HCT116 (cell line): ENCODE measurements at regions of chr22 and their contacts with region 1.

Region 1: GRCh38 chr22:35761037-35761436 is 43.4 kb downstream of the APOL5 start:
- DNase-seq: peak; percentile 8
- ATAC-seq: peak; percentile 58; the same call in 1 of the 2 replicates
- H3K4me3 ChIP-seq: no peak overlapping the region
- H3K27ac ChIP-seq: no peak overlapping the region
- H3K4me1 ChIP-seq: no peaks in the 10 kb centered on the region
- H3K27me3 ChIP-seq: no peaks in the 10 kb centered on the region
- CTCF ChIP-seq: peak in 2 of 3 experiments; percentile 19 to 35; a peak in 2 of 6 replicates
- POLR2A ChIP-seq: no peak
- RAD21 ChIP-seq: peak; percentile 56

Region 2: DNA sequence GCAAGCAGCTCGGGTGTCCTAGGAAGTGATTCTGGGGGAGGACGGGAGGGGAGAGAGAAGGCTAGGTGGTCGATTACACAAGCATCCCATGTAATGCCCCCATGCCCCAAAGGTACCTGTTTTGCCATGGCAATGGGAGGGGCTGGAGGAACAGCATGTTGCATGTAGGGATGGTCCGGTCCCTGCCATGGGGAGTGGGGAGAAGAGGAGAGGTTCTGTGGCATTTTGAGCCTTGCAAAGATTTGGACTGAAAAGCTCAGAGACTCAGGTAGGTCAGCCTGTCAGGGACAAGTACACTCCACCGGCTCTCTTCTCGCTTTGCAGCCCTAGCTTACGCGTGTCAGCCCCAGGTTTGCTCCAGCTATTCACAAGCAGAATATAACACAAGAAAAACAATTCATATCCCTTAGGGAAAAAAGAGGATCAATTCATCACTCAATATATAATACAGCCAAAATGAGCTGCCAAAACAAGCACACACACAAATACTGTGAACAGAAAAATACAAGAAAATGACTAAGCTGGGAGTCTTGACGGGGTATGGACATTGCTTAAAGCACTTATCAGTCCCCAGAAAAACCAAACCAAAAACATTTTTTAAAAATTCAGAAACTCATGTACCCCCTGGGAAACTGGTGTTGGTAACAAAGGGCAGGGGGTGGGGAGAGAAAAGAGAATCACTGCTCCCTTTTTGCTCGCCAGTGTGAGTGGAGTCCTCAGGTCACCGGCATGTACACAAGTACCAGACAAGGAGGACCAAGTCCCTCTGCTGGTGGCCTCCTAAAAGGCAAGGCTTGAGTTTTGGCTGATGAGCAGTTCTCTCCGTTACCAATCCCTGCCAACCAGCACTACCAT is 21.7 kb before region 1 on chr22:
- CTCF ChIA-PET with region 1: no interaction called
- POLR2A ChIA-PET with region 1: no interaction called
- RAD21 ChIA-PET with region 1: no interaction called
- intact Hi-C with region 1: no loop called
- DNase-seq: no peak
- ATAC-seq: no peak
- H3K4me3 ChIP-seq: no peak overlapping the region
- H3K27ac ChIP-seq: no peak overlapping the region
- H3K4me1 ChIP-seq: peaks cover 29 to 36% of the 10 kb centered on the region in 2 experiments
- H3K27me3 ChIP-seq: no peaks in the 10 kb centered on the region
- CTCF ChIP-seq: peak in 2 of 3 experiments; percentile 38 to 40; a peak in 3 of 6 replicates
- POLR2A ChIP-seq: no peak
- RAD21 ChIP-seq: no peak

Region 3: DNA sequence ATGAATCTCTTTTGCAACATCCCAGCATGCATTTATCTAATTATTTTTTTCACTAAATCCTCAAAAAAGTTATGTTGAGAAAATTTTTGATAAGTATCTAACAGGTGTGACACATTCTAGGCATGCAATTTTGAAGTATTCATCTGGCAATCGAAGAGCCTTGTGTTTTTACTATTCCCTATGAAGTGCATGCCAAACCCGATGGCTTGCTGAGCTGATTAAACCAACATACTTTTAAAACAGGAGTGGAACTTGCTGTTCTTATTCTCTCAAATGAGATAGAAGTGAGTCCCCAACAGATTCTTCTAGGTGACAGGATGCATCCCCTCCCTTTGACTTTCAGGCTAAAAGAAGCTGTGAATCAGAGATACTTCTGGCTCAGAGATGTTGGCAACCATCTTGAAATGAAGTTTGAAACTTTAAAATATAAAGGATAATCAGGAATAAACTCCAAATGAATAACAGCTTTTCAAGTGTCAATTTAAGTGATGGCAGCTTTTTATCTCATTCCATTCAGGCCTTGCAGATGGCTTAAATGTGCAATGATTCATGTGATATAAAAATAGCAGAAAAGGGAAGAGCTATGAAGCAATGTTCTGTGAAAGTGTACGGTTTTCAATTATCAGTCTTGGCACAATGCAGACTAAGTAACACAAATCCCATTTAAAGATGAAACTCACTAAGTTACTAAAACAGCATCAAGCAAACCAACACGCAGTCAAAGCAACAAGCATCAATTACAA is 24.3 kb after region 1 on chr22:
- CTCF ChIA-PET with region 1: no interaction called
- POLR2A ChIA-PET with region 1: no interaction called
- RAD21 ChIA-PET with region 1: no interaction called
- intact Hi-C with region 1: no loop called
- DNase-seq: no peak
- ATAC-seq: no peak
- H3K4me3 ChIP-seq: no peak overlapping the region
- H3K27ac ChIP-seq: no peak overlapping the region
- H3K4me1 ChIP-seq: no peaks in the 10 kb centered on the region
- H3K27me3 ChIP-seq: no peaks in the 10 kb centered on the region
- CTCF ChIP-seq: no peak
- POLR2A ChIP-seq: no peak
- RAD21 ChIP-seq: no peak

Region 4: DNA sequence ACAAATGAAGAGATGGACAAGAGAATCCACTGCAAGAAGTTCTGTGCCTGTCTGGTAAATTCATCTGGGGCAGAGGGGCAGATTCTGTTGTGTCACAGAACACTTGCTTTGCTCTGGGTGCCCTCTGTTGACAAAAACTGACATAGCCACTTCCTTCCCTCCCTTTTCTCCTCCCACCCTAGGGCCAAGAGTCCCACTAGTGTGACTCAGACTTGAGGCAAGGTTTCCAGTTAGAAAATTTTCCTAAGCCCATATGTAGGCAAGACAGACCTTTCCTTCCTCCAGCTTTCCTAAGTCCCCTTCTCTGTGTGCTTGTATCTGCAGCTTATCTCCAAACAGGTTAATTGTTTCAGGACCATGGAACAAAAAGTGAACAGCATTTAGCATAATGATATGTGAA is 160.7 kb after region 1 on chr22:
- CTCF ChIA-PET with region 1: no interaction called
- POLR2A ChIA-PET with region 1: no interaction called
- RAD21 ChIA-PET with region 1: no interaction called
- intact Hi-C with region 1: loop called (anchors 5 kb)
- DNase-seq: peak; percentile 76
- ATAC-seq: peak; percentile 99
- H3K4me3 ChIP-seq: no peak overlapping the region
- H3K27ac ChIP-seq: peak overlapping the region; percentile 53
- H3K4me1 ChIP-seq: peaks cover 7 to 27% of the 10 kb centered on the region in 2 experiments
- H3K27me3 ChIP-seq: no peaks in the 10 kb centered on the region
- CTCF ChIP-seq: peak; percentile 50 to 81 (median 75)
- POLR2A ChIP-seq: no peak
- RAD21 ChIP-seq: peak; percentile 90